Lower leg skin (tissue), 4 donors: ENCODE measurements at regions of chr6 and their contacts with region 1.

Region 1: DNA sequence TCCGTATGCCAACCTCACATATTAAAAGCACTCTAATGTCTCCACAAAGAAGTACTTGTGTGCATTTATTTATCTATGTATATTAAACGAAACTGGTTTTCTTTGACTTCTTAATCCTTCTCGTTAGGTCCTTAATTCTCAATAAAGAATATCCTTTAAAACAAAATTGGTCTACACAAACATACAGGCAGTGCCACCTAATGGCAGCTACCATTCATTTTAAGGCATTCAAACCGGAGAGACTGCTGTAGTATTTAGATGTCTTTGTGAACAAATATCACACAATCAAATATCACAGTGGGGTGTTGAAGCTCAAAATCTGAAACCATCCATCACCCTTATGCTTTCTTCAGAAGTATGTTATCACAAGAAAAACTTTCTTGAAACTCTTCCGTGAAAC is 96.6 kb upstream of the IRAK1BP1 start:
- DNase-seq: no peak
- H3K4me3 ChIP-seq: no peak overlapping the region
- CTCF ChIP-seq: no peak
- POLR2A ChIP-seq: no peak

Region 2: GRCh38 chr6:77178821-77179220 is 1591.9 kb before region 1 on chr6:
- intact Hi-C with region 1: loop called (anchors 5 kb)
- DNase-seq: no peak
- H3K4me3 ChIP-seq: no peak overlapping the region
- CTCF ChIP-seq: no peak
- POLR2A ChIP-seq: no peak

Region 3: GRCh38 chr6:78259935-78260334 is 510.8 kb before region 1 on chr6:
- intact Hi-C with region 1: no loop called
- DNase-seq: no peak
- H3K4me3 ChIP-seq: no peak overlapping the region
- CTCF ChIP-seq: no peak
- POLR2A ChIP-seq: no peak